Sigmoid colon (tissue), 7 donors: ENCODE measurements at regions of chr12 and their contacts with region 1.

Region 1: GRCh38 chr12:15151161-15152120 is 69.8 kb downstream of the RERG start:
- DNase-seq: no peak
- H3K4me3 ChIP-seq: no peak overlapping the region
- H3K27ac ChIP-seq: peak overlapping the region in 3 of 4 donors; percentile 74 to 83 (median 75)
- H3K4me1 ChIP-seq: peaks cover 0 to 84% (median 80%) of the 10 kb centered on the region in 4 donors
- H3K27me3 ChIP-seq: no peaks in the 10 kb centered on the region
- CTCF ChIP-seq: peak; percentile 50 to 60 (median 55)
- EP300 ChIP-seq: no peak
- POLR2A ChIP-seq: no peak

Region 2: DNA sequence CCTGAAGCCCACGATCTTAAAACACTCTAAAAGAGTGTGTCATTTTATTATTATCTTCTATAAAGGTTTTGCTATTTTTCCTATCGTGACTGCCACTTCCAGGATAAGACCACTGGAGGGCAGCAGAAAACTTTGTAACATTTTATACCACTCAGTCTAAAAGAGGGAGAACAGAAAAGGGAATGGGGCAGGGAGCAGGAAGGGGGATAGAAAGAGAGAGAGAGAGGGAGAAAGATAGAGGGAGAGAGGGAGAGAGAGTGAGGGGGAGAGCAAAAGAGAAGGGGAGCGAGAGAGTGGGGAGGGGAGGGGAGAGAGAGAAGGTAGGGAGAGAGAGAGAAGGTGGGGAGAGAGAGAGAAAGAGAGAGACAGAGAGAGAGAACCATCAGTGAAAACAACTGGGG is 306.1 kb before region 1 on chr12:
- intact Hi-C with region 1: loop called (anchors 10 kb)
- DNase-seq: no peak
- H3K4me3 ChIP-seq: no peak overlapping the region
- H3K27ac ChIP-seq: peak overlapping the region in 2 of 4 donors; percentile 9 to 18
- H3K4me1 ChIP-seq: peaks cover 0 to 39% (median 30%) of the 10 kb centered on the region in 4 donors
- H3K27me3 ChIP-seq: no peaks in the 10 kb centered on the region
- CTCF ChIP-seq: peak; percentile 68 to 91 (median 86)
- EP300 ChIP-seq: no peak
- POLR2A ChIP-seq: no peak

Region 3: GRCh38 chr12:14884458-14884878 is 267.0 kb before region 1 on chr12:
- intact Hi-C with region 1: loop called (anchors 10 kb)
- DNase-seq: peak; percentile 95
- H3K4me3 ChIP-seq: peak overlapping the region; percentile 34 to 52 (median 46)
- H3K27ac ChIP-seq: peak overlapping the region; percentile 82 to 87 (median 82)
- H3K4me1 ChIP-seq: peaks cover 0 to 16% (median 13%) of the 10 kb centered on the region in 4 donors
- H3K27me3 ChIP-seq: no peaks in the 10 kb centered on the region
- CTCF ChIP-seq: no peak
- EP300 ChIP-seq: peak in 1 of 4 donors; percentile 18
- POLR2A ChIP-seq: peak; percentile 12 to 20

Region 4: GRCh38 chr12:15001733-15002382 is 149.6 kb before region 1 on chr12:
- intact Hi-C with region 1: loop called (anchors 2 kb)
- DNase-seq: peak; percentile 91
- H3K4me3 ChIP-seq: peak overlapping the region in 2 of 4 donors; percentile 6 to 12
- H3K27ac ChIP-seq: peak overlapping the region; percentile 64 to 85 (median 74)
- H3K4me1 ChIP-seq: peaks cover 0 to 71% (median 47%) of the 10 kb centered on the region in 4 donors
- H3K27me3 ChIP-seq: no peaks in the 10 kb centered on the region
- CTCF ChIP-seq: no peak
- EP300 ChIP-seq: peak in 1 of 4 donors; percentile 2
- POLR2A ChIP-seq: no peak

Region 5: DNA sequence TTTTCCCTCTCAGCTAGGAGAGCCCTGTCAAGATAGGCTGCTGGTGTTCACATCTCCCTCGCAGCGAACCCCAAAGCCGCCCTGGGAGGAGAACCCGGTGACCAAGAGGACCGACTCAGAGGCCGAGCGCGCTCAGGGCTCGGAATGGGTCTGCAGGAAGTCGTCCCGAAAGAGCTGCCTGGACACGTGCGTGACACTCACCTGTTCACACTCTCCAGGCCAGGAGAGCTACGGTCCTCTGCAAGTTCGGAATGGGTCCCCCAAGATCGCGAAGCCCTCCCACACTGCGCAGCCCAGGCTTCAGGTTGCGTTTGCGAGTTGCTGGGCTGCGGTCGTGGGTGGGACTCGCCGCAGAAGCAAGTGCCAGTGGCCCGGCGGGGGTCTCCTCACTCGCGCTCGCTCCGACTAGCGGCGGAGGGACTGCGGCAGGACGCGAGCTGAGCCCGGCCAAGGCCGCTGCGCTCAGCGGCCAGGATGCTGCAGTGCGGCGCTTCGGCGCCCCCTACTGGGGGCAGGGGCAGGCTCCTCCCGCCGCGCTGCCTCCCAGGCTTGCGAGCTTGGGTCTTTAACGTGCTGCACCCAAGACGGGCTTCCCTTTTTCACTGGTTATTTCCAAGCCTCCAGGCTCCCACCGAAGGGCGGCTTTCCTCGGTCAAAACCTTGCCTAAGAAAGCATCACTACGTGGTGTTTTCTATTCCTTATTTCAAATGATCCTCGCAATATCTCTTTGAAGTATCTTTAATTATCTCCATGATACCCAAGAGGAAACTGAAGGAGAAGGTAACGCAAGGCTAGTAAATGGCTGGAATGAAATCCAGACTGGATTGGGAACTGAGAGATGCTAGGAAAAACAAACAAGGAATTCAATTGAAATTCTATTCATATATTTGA is 69.8 kb after region 1 on chr12 and contains the start of gene RERG:
- intact Hi-C with region 1: loop called (anchors 1 kb)
- DNase-seq: peak; percentile 91
- H3K4me3 ChIP-seq: peak within 1 kb of the TSS; percentile 55 to 70 (median 61)
- H3K27ac ChIP-seq: peak within 1 kb of the TSS; percentile 78 to 88 (median 86)
- H3K4me1 ChIP-seq: peaks cover 0 to 38% (median 8%) of the 10 kb centered on the region in 4 donors
- H3K27me3 ChIP-seq: no peaks in the 10 kb centered on the region
- CTCF ChIP-seq: peak; percentile 91 to 99 (median 97)
- EP300 ChIP-seq: no peak
- POLR2A ChIP-seq: no peak
- total RNA-seq, gene RERG: 69.9 to 104 (median 78.3) TPM

Region 6: GRCh38 chr12:15268927-15269552 is 117.6 kb after region 1 on chr12:
- intact Hi-C with region 1: loop called (anchors 1 kb)
- DNase-seq: peak; percentile 72
- H3K4me3 ChIP-seq: no peak overlapping the region
- H3K27ac ChIP-seq: peak overlapping the region in 2 of 4 donors; percentile 16 to 36
- H3K4me1 ChIP-seq: peaks cover 0 to 15% (median 10%) of the 10 kb centered on the region in 4 donors
- H3K27me3 ChIP-seq: no peaks in the 10 kb centered on the region
- CTCF ChIP-seq: peak; percentile 78 to 90 (median 84)
- EP300 ChIP-seq: no peak
- POLR2A ChIP-seq: no peak

Region 7: DNA sequence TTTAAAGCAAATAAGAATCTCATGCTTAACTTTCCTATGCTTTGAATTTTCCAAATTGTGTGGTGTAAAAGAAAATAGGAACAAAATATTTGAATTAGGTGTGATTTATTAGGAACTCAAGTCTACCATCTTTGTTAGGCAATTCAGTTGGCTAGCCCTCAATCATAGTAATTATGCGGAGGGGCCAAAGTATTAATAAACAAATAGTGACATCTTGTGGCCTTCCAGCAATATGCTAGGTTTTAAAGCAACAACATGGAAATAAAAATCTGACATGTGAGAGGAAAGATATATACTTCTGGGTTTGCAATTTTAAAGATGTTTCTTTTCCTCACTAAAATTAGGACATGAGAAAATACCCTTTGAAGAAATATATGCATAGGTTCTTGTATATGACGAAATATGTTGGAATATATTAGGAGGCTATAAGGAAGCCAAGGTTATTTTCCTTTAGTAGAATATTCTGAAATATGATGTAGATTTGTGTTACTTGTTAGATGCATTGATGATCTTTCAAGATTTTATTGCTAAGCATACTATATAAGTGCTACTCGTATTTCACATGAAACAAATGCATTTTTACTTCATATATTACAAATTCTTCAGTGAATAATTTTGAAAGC is 371.2 kb after region 1 on chr12:
- intact Hi-C with region 1: loop called (anchors 10 kb)
- DNase-seq: no peak
- H3K4me3 ChIP-seq: no peak overlapping the region
- H3K27ac ChIP-seq: no peak overlapping the region
- H3K4me1 ChIP-seq: no peaks in the 10 kb centered on the region
- H3K27me3 ChIP-seq: no peaks in the 10 kb centered on the region
- CTCF ChIP-seq: peak; percentile 39 to 48 (median 47)
- EP300 ChIP-seq: no peak
- POLR2A ChIP-seq: no peak